ENCODE measurements at regions of chr11 and their contacts with region 1.

Region 1: DNA sequence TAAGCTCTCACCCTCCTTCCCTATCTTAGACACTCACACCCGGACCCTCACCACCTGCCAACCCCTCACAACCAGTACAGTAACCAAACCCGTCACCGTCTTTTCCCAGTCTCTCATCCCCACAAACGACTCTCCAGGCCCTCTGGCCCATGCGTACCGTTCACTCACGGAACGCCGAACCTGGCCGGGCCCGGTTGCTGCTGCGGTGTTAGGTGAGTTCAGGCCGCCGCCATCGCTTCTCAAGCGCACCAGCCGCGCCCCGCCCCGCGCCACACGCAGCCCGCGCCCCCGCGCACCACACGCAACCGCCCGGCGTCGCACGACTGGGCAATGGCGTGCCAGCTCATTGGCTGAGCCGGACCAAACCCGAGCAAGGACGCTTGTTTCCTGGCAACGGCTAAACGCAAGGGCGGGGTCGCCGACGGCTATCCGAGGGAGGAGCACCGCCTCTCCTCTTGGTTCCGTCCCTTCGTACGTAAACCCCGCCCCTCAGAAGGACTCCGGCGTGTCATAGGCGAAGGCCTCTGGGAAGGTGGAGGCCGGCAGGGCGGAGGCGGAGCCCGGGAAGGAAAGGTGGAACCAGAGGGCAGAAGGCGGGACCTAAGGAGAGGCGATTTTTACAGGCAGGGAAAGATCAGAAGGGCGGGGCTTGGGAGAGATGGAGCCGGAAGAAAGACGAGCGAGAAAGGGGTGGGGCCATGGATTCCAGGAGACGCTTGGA is at the start of gene FHIP1B:
- DNase-seq: peak; percentile 95 to 100 (median 100)
- ATAC-seq: peak; percentile 95
- H3K4me3 ChIP-seq: peak within 1 kb of the TSS; percentile 96
- H3K4me3 Mint-ChIP-seq: peak within 1 kb of the TSS; percentile 90 to 100 (median 98)
- H3K27ac ChIP-seq: peak within 1 kb of the TSS; percentile 81
- H3K27ac Mint-ChIP-seq: peak within 1 kb of the TSS; percentile 87 to 100 (median 97)
- H3K4me1 ChIP-seq: peaks cover 14 to 19% of the 10 kb centered on the region in 2 donors
- H3K4me1 Mint-ChIP-seq: peaks cover 36 to 55% (median 50%) of the 10 kb centered on the region in 7 donors
- H3K27me3 ChIP-seq: no peaks in the 10 kb centered on the region
- H3K27me3 Mint-ChIP-seq: no peaks in the 10 kb centered on the region
- total RNA-seq, gene FHIP1B: 26.8 to 52.4 (median 44.3) TPM

Region 2: DNA sequence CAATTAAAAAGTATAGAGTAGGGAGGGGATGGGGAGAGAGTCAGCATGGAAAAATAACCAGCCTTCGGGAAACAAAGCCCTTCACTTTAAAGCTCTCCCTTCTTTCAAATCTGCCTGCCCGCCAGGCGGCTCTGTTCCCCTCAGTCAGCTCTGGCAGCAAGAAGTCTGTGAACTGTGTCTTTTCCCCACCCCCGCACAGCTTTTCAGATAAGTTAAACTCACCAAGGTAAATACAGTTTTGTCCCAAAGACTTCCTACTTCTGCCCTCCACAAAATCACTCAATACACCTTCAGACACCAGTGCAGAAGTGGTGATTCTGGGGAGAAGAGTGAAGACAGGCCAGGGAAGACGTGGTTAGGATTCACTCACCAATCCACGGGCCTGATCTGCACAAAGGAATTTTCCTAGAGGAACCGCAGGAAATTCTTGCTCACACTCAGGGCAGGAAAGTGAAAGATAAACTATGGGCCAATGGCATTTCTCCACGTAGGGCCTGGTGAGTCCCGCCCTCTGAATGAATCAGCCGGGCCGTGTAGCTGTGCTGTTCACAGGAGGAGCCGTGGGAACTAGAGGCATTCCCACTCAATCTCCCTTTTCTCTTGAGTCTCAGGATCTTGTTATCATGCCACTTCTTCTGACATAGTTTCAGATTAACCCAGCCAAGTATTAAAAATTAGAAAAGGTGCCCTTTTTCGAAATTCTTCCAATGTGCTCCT is 549.7 kb before region 1 on chr11 and contains the start of gene TRIM5:
- CTCF ChIA-PET with region 1: no interaction called
- POLR2A ChIA-PET with region 1: no interaction called
- intact Hi-C with region 1: loop called (anchors 1 to 2 kb)
- DNase-seq: peak; percentile 37 to 86 (median 83)
- ATAC-seq: peak; percentile 90
- H3K4me3 ChIP-seq: peak within 1 kb of the TSS; percentile 90
- H3K4me3 Mint-ChIP-seq: peak within 1 kb of the TSS; percentile 81 to 99 (median 94)
- H3K27ac ChIP-seq: peak within 1 kb of the TSS; percentile 76
- H3K27ac Mint-ChIP-seq: peak within 1 kb of the TSS; percentile 90 to 98 (median 95)
- H3K4me1 ChIP-seq: peaks cover 9 to 23% of the 10 kb centered on the region in 2 donors
- H3K4me1 Mint-ChIP-seq: peaks cover 28 to 83% (median 66%) of the 10 kb centered on the region in 7 donors
- H3K27me3 ChIP-seq: no peaks in the 10 kb centered on the region
- H3K27me3 Mint-ChIP-seq: no peaks in the 10 kb centered on the region
- total RNA-seq, gene TRIM5: 16.9 to 36.8 (median 26.2) TPM

Region 3: DNA sequence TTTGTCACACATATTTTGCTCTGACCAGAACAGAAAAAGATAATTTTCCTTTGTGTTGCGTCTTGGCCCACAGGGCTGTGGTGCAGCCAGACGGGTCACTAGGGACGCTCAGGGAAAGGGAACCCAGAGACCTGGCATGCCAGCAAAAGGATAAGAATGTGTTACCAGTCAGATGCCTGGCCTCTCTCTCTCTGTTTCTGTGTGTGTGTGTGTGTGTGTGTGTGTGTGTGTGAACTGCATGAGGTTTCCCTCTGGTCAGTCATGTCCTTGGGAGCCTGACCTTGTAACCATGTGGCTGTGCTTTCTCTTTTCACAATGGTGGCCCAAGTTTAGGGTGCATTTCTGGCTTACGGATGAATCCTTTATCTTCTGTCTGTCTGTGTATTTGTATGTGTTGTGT is 50.5 kb after region 1 on chr11:
- CTCF ChIA-PET with region 1: no interaction called
- POLR2A ChIA-PET with region 1: no interaction called
- intact Hi-C with region 1: no loop called
- DNase-seq: no peak
- ATAC-seq: no peak
- H3K4me3 ChIP-seq: no peak overlapping the region
- H3K4me3 Mint-ChIP-seq: no peak overlapping the region
- H3K27ac ChIP-seq: no peak overlapping the region
- H3K27ac Mint-ChIP-seq: no peak overlapping the region
- H3K4me1 ChIP-seq: no peaks in the 10 kb centered on the region
- H3K4me1 Mint-ChIP-seq: peaks cover 0 to 1% (median 0%) of the 10 kb centered on the region in 7 donors
- H3K27me3 ChIP-seq: no peaks in the 10 kb centered on the region
- H3K27me3 Mint-ChIP-seq: peaks cover 40 to 63% (median 57%) of the 10 kb centered on the region in 5 donors

Region 4: DNA sequence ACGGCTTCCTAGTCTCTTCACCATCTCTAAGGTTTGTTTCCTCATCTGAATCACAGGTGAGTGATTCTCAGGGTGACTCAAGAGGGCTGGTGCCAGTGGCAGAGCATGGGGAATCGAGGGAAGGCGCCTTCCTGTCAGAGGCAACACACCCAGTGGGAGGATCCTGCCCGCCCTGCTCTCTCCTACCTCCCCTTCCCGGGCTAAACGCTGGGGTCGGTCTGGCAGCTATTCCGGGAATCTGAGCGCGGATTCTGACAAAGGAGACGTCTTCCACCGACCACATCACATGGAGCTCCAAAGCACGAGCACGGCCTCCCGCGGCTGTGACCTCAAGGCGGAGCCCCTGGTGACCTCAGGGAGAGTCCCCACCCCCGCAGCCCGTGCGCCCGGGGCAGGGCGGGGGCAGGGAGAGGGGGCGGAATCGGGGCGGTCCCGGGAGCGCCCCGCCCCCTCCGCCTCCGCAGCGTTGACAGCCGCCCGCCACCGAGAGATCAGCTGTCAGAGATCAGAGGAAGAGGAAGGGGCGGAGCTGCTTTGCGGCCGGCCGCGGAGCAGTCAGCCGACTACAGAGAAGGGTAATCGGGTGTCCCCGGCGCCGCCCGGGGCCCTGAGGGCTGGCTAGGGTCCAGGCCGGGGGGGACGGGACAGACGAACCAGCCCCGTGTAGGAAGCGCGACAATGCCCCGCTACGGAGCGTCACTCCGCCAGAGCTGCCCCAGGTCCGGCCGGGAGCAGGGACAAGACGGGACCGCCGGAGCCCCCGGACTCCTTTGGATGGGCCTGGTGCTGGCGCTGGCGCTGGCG is 155.6 kb after region 1 on chr11 and contains the start of gene SMPD1:
- CTCF ChIA-PET with region 1: no interaction called
- POLR2A ChIA-PET with region 1: no interaction called
- intact Hi-C with region 1: loop called (anchors 1 kb)
- DNase-seq: peak; percentile 85 to 94 (median 92)
- ATAC-seq: peak; percentile 97
- H3K4me3 ChIP-seq: peak within 1 kb of the TSS; percentile 94
- H3K4me3 Mint-ChIP-seq: peak within 1 kb of the TSS; percentile 91 to 98 (median 94)
- H3K27ac ChIP-seq: peak within 1 kb of the TSS; percentile 95
- H3K27ac Mint-ChIP-seq: peak within 1 kb of the TSS; percentile 93 to 100 (median 99)
- H3K4me1 ChIP-seq: peaks cover 25 to 53% of the 10 kb centered on the region in 2 donors
- H3K4me1 Mint-ChIP-seq: peaks cover 31 to 74% (median 66%) of the 10 kb centered on the region in 7 donors
- H3K27me3 ChIP-seq: no peaks in the 10 kb centered on the region
- H3K27me3 Mint-ChIP-seq: peaks cover 0 to 13% (median 0%) of the 10 kb centered on the region in 5 donors
- total RNA-seq, gene SMPD1: 43.0 to 70.9 (median 55.4) TPM

Region 5: DNA sequence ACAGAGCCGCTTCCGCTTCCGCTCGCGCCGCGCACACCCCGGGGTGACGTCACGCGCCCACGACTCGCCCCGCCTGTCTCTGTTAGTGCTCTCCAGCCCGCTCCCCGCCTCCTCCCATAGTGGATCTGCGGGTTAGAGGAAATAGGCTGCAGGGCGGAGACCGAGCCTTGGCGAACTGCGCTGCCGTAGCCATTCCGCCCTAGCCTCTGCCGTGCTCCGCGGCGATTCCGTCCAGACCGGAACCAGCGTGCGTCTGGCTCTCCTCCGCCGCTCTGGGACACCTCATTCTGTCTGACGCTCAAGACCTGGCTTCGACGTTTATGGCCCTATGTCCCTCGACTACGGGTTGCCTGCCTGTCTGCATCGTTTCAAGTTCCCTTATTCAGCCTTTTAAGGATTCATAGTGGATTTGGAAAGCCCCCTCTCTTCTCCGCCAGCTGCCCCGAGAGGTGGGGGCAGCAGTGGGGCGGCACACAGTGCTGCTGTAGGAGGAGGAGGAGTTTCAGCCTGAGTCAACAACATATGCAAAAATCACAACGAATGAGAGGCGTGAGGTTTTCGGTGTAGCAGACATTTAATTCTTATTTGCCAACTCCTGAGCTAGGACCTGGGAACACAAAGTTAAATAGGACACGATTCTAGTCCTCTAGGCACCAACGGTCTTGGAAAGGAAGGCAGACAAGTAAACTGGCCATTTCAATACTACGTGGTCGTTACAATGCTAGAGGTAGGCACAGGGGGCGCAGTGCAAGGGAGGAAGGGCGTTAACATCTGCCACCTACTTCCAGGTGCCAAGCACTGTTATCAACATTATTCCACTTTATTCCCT is 377.9 kb after region 1 on chr11 and contains the start of gene TAF10:
- CTCF ChIA-PET with region 1: no interaction called
- POLR2A ChIA-PET with region 1: no interaction called
- intact Hi-C with region 1: loop called (anchors 1 kb)
- DNase-seq: peak; percentile 89 to 97 (median 95)
- ATAC-seq: peak; percentile 94
- H3K4me3 ChIP-seq: peak within 1 kb of the TSS; percentile 83
- H3K4me3 Mint-ChIP-seq: peak within 1 kb of the TSS in 6 of 10 donors; percentile 84 to 94 (median 92)
- H3K27ac ChIP-seq: peak within 1 kb of the TSS; percentile 91
- H3K27ac Mint-ChIP-seq: peak within 1 kb of the TSS in 5 of 9 donors; percentile 90 to 98 (median 96)
- H3K4me1 ChIP-seq: peaks cover 25% of the 10 kb centered on the region in 2 donors
- H3K4me1 Mint-ChIP-seq: peaks cover 9 to 46% (median 33%) of the 10 kb centered on the region in 7 donors
- H3K27me3 ChIP-seq: no peaks in the 10 kb centered on the region
- H3K27me3 Mint-ChIP-seq: no peaks in the 10 kb centered on the region
- total RNA-seq, gene TAF10: 116 to 135 (median 128) TPM

Region 6: DNA sequence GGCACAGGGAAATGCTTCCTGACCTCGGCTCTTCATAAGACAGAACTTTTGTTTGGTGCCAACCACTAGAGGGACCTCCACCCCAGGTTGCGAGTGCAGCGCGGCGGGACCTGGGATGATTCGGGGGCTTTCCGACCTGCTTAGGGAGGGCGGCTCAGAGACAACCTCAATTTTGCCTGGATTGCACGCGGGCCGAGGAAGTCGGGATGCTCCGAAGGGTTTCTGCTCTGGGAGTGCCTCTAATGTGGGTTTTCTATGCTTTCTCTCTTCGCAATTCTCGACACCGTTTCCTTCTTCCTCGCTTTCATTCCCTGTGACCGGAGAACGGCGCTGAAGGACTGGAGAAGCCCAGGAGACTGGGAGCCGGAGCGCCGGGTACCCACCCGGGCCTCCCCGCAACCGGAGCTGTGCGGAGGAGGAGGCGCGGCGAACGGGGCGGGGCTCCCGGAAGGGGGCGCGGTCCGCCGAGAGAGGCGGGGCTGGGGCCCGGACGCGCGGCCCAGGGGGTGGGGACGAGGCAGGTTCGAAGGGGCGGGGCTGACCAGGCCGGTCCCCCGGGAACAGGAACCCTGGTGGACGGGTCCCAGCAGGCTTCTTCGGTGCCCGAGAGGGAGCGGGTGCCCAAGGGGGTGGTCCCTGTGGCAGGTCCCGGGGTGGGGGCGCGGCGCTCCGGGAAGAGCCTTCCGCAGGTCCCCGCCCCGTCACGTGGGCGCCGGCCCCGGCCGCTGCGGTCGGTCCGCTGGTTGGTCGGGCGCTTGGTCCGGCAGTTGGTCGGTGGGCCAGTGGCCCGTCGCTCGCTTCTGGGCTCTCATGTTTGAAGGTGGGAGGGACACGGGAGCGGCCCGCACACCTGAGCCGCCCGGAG is 1278.9 kb after region 1 on chr11 and contains the start of gene PPFIBP2:
- CTCF ChIA-PET with region 1: no interaction called
- POLR2A ChIA-PET with region 1: no interaction called
- intact Hi-C with region 1: loop called (anchors 2 to 10 kb)
- DNase-seq: peak; percentile 75 to 92 (median 85)
- ATAC-seq: peak; percentile 93
- H3K4me3 ChIP-seq: peak within 1 kb of the TSS; percentile 94
- H3K4me3 Mint-ChIP-seq: peak within 1 kb of the TSS; percentile 92 to 98 (median 95)
- H3K27ac ChIP-seq: peak within 1 kb of the TSS; percentile 91
- H3K27ac Mint-ChIP-seq: peak within 1 kb of the TSS in 8 of 9 donors; percentile 86 to 98 (median 96)
- H3K4me1 ChIP-seq: peaks cover 4 to 39% of the 10 kb centered on the region in 2 donors
- H3K4me1 Mint-ChIP-seq: peaks cover 11 to 65% (median 52%) of the 10 kb centered on the region in 7 donors
- H3K27me3 ChIP-seq: no peaks in the 10 kb centered on the region
- H3K27me3 Mint-ChIP-seq: peaks cover 0 to 23% (median 0%) of the 10 kb centered on the region in 5 donors
- total RNA-seq, gene PPFIBP2: 5.7 to 55.6 (median 45.9) TPM